ENCODE measurements at regions of chr7 and their contacts with region 1.

Region 1: GRCh38 chr7:92731335-92732063 is 104.9 kb downstream of the CDK6 start:
- DNase-seq: peak; percentile 66
- H3K4me3 Mint-ChIP-seq: peak overlapping the region; percentile 9
- H3K27ac Mint-ChIP-seq: peak overlapping the region; percentile 95
- H3K4me1 Mint-ChIP-seq: peaks cover 64% of the 10 kb centered on the region
- H3K27me3 Mint-ChIP-seq: no peaks in the 10 kb centered on the region

Region 2: DNA sequence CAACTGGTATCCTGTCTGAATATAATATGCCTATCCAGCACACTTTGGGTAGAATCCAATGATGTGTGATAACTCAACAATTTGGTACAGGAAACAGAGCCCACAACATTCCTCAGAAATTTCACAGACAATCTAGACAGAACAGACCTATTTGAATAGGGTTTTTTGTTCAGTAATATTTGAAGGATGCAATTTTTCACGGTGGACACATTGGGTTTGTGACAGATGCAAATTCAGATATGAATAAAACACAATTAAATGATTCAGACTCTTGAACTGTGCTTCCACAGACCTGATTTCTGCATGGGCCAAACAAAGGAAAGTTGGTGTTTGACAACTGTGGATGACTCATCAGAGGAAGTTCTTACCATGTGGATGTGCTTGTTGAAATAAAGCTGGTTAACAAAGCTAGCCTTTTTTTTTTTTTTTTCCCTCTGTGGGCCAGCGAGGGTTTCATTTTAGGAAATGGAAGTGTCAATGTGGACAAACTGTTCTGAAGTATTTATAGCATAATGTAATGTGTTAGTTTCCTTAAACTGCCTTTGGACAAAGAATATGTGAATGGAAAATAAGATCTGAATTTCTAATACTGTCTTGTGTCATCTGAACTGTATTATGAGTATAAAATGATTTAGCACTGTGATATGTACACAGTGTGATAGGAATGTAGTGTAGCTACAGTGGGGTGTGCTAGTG is 98.1 kb before region 1 on chr7:
- CTCF ChIA-PET with region 1: no interaction called
- intact Hi-C with region 1: loop called (anchors 1 kb)
- DNase-seq: peak; percentile 49
- H3K4me3 Mint-ChIP-seq: no peak overlapping the region
- H3K27ac Mint-ChIP-seq: peak overlapping the region; percentile 92
- H3K4me1 Mint-ChIP-seq: peaks cover 84% of the 10 kb centered on the region
- H3K27me3 Mint-ChIP-seq: no peaks in the 10 kb centered on the region

Region 3: GRCh38 chr7:92648067-92648466 is 83.4 kb before region 1 on chr7:
- CTCF ChIA-PET with region 1: no interaction called
- intact Hi-C with region 1: loop called (anchors 1 kb)
- DNase-seq: no peak
- H3K4me3 Mint-ChIP-seq: no peak overlapping the region
- H3K27ac Mint-ChIP-seq: peak overlapping the region; percentile 88
- H3K4me1 Mint-ChIP-seq: peaks cover 89% of the 10 kb centered on the region
- H3K27me3 Mint-ChIP-seq: no peaks in the 10 kb centered on the region

Region 4: DNA sequence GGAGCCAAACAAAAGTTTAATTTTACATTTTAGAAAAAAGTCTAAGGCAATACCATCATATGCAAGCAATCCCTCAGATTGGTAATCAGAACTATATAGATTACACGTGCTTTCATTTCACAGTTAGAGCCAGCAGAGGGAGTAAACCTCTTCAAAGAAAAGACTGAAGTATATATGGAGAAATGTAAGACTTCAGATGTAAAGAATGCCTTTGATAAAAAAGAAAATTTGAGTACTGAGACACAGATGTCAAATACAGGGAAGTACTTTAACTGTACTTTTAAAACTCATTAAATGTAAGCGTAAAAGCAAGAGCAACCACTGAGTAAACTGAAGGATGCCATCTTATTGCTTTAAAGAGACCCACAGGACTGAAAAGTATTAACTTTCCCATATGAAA is 39.9 kb before region 1 on chr7:
- CTCF ChIA-PET with region 1: interaction called, 3 read pairs
- intact Hi-C with region 1: loop called (anchors 1 kb)
- DNase-seq: peak; percentile 46
- H3K4me3 Mint-ChIP-seq: no peak overlapping the region
- H3K27ac Mint-ChIP-seq: peak overlapping the region; percentile 87
- H3K4me1 Mint-ChIP-seq: peaks cover 70% of the 10 kb centered on the region
- H3K27me3 Mint-ChIP-seq: no peaks in the 10 kb centered on the region

Region 5: DNA sequence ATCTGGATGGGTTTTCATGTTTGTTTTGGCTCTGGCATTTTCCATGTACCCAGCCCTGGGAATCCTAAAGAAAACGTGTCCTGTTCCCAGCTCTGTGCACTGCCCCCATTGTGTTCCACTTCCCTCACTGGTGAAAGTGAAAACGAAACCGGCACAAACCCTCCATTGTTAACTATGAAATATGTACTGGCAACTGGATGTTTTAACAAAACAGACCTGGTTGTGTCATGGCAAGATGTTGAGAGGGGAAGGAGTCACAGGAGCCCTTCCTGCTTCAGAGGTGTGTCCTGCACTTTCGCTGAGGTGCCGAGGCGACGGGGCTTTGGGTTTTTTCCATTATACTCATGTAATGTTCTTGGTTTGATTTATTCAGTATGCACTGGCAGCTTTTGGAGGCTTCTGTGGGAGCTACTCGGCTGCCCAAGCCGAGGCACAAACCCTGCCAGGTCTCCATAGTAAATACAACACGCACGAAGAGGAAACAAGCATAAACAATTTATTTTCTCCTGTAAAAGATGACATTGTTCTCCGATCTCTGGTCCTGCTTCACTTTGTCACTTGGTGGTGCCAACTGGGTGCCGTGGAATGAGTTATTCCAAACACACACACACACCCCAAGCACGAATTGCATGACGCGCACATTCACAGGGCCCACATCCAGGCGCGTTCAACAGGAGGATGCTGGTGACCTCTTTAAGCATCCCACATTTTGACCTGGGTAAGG is 13.3 kb before region 1 on chr7:
- CTCF ChIA-PET with region 1: interaction called, 5 read pairs
- intact Hi-C with region 1: loop called (anchors 1 kb)
- DNase-seq: peak; percentile 82
- H3K4me3 Mint-ChIP-seq: peak overlapping the region; percentile 79
- H3K27ac Mint-ChIP-seq: peak overlapping the region; percentile 93
- H3K4me1 Mint-ChIP-seq: peaks cover 74% of the 10 kb centered on the region
- H3K27me3 Mint-ChIP-seq: no peaks in the 10 kb centered on the region

Region 6: DNA sequence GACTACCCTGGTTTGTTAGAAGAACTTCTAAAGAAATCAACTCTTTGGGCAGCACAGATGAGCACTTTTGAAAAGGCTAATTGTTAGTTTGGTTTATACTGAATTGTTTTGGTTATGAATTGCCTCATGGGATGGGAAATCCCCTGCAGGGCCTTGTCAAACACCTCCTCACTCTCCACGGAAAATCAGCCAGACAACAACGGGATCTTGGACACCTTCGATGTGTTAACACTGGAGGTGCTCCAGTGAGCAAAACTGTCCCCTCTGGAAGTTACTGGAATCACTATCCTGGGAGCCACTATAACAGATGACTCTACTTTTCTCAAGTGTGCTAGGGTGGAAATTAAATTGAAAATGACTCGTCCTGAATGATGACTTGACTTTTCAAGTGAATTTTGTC is 66.2 kb after region 1 on chr7:
- CTCF ChIA-PET with region 1: no interaction called
- intact Hi-C with region 1: loop called (anchors 1 kb)
- DNase-seq: peak; percentile 51
- H3K4me3 Mint-ChIP-seq: no peak overlapping the region
- H3K27ac Mint-ChIP-seq: no peak overlapping the region
- H3K4me1 Mint-ChIP-seq: peaks cover 29% of the 10 kb centered on the region
- H3K27me3 Mint-ChIP-seq: no peaks in the 10 kb centered on the region